CD14-positive monocyte (primary cell): ENCODE measurements at regions of chr14 and their contacts with region 1.

Region 1: DNA sequence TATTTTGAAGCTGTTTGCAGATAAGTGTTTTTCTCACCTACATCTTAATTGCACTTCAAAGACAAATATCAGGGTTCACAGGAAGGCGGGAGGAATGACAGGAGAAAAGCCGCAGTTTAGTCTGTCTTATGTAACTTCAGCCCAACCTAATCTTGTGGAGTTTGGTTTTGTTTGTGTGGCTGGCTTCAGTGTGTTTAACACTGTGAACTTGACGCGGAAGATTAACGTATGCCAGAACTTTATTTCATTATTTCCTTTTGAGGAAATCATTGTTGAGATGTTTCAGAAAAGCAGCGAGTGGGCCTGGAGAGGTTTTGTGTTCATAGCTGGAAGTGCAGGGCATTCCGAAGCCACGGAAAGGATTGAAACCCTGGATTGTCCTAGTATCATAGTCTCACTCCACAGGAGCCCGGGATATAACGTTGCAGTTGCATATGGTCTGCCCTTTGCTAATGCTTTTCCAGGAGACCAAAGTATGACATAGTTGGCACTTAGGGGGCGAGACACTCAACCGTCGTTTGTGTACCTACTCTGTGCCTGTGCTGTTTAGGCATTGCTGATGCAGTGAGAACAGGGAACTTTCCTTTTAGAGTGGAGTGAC is 2.0 kb downstream of the PELI2 start:
- DNase-seq: peak in 1 of 3 donors; percentile 12
- H3K4me3 ChIP-seq: peak overlapping the region; percentile 66 to 95 (median 85)
- H3K4me3 Mint-ChIP-seq: peak overlapping the region; percentile 82 to 97
- H3K27ac ChIP-seq: peak overlapping the region in 1 of 2 donors; percentile 78
- H3K27ac Mint-ChIP-seq: peak overlapping the region; percentile 70 to 93 (median 86)
- H3K4me1 ChIP-seq: peaks cover 49 to 70% of the 10 kb centered on the region in 2 donors
- H3K4me1 Mint-ChIP-seq: peaks cover 76% of the 10 kb centered on the region
- H3K27me3 ChIP-seq: no peaks in the 10 kb centered on the region
- H3K27me3 Mint-ChIP-seq: no peaks in the 10 kb centered on the region
- CTCF ChIP-seq: no peak

Region 2: DNA sequence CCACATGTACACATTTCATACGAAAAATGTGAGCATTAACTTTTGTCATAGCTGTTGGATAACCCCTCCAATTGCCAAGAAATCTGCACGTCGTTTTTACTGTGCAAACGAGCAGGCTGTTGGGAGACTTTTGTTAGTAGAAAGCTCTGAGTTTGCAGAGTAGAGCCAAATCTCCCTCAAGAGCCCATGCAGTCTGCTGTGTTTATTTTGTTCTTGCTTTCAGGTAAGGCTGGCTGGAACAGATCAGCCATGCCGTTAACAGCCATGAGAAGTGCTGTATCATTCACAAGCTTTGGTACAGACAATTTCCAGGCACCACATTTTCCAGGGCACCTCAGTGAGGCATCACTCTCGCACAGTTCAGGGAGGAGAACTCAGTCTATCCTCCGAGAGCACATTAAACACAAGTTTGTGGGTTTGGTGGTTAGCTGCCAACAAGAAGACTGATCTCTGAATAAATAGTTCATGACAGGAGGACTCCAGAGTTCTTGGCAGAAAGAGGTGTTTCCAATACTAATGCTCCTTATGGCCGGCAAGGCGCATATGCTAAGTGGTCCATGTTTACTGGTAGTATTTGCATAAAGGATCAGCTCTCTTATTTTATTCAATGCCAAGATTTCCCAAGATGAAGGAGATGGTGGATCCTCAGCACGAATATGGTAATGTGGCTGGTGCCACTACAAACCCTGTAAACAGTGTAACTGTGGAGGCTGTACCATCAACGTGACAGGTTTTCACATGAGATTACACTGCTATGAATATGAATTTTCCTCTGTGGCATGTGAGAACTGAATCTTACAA is 32.3 kb before region 1 on chr14:
- intact Hi-C with region 1: loop called in 1 of 2 experiments (anchors 5 kb)
- DNase-seq: no peak
- H3K4me3 ChIP-seq: no peak overlapping the region
- H3K4me3 Mint-ChIP-seq: no peak overlapping the region
- H3K27ac ChIP-seq: no peak overlapping the region
- H3K27ac Mint-ChIP-seq: no peak overlapping the region
- H3K4me1 ChIP-seq: peaks cover 16 to 22% of the 10 kb centered on the region in 2 donors
- H3K4me1 Mint-ChIP-seq: peaks cover 25% of the 10 kb centered on the region
- H3K27me3 ChIP-seq: no peaks in the 10 kb centered on the region
- H3K27me3 Mint-ChIP-seq: peaks cover 0 to 2% (median 1%) of the 10 kb centered on the region in 3 donors
- CTCF ChIP-seq: no peak